PC-9 (cell line): ENCODE measurements at regions of chr7 and their contacts with region 1.

Region 1: DNA sequence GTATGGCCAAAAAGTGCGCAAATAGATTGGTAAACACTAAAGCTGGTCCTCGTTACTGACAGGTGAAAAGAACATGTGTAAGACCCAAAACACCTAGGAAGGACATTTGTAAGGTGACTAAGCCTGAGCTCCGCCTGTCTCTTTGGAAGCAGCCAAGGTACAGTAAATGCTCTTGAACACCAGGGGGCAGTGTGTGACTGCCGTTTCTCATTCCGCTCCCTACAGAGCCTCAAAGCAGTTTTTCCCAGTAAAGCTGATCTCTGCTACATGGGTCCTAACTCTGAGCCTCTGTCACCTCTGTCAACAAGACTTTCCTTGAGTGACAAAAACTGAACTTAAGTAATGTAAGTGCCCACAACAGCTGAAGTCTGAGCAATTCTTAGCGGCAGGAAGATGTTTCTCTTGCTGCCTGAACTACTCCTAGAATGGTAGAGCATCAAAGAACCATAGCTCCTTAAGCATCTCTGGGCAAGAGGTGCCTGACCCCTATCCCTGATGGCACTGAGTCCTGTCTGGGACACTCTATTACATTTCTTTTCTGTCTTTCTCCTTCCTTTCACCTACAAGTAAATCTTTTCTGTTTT is 238.0 kb upstream of the INHBA start:
- DNase-seq: peak; percentile 61 to 69
- H3K4me3 ChIP-seq: no peak overlapping the region
- H3K27ac ChIP-seq: no peak overlapping the region
- H3K4me1 ChIP-seq: no peaks in the 10 kb centered on the region
- H3K27me3 ChIP-seq: peaks cover 23% of the 10 kb centered on the region
- CTCF ChIP-seq: peak; percentile 96

Region 2: DNA sequence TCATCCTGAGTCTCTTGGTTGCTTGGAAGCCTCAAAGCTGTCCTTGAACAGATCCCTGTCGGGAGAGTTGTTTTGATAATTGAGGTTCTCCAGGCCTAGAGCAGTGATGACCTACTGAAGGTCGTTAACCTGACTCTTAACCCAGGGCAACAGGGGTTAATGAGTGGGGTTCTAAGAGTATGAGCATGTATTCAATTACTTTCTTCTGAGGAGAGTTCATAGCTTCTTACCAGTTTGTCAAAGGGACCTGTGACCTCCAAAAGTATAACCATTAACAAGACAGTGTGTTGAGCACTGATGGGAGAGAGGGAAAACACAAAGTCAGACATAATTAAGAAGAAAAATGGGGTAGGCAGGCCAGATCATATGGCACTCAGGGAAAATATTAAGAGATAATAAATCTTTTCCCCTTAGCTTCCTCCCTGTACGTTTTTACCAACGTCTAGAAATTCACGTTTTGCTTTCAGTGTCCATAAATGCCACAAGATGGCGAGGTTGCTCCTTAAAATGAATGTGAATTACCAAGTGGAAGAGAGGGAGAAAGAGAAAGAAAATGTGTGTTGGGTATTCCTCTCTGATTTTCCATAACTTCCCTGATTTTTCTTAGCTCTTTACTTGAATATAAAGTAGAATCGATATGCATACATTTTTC is 1708.5 kb before region 1 on chr7:
- CTCF ChIA-PET with region 1: no interaction called
- POLR2A ChIA-PET with region 1: no interaction called
- intact Hi-C with region 1: loop called (anchors 5 kb)
- DNase-seq: peak; percentile 28 to 48
- H3K4me3 ChIP-seq: no peak overlapping the region
- H3K27ac ChIP-seq: no peak overlapping the region
- H3K4me1 ChIP-seq: no peaks in the 10 kb centered on the region
- H3K27me3 ChIP-seq: no peaks in the 10 kb centered on the region
- CTCF ChIP-seq: peak; percentile 84

Region 3: GRCh38 chr7:41892356-41893100 is 48.3 kb before region 1 on chr7:
- CTCF ChIA-PET with region 1: no interaction called
- POLR2A ChIA-PET with region 1: no interaction called
- intact Hi-C with region 1: no loop called
- DNase-seq: peak in 1 of 2 experiments; percentile 26
- H3K4me3 ChIP-seq: no peak overlapping the region
- H3K27ac ChIP-seq: no peak overlapping the region
- H3K4me1 ChIP-seq: no peaks in the 10 kb centered on the region
- H3K27me3 ChIP-seq: no peaks in the 10 kb centered on the region
- CTCF ChIP-seq: no peak; the same call in 1 of the 2 replicates

Region 4: GRCh38 chr7:42006801-42007513 is 66.1 kb after region 1 on chr7:
- CTCF ChIA-PET with region 1: interaction called, 17 read pairs
- POLR2A ChIA-PET with region 1: no interaction called
- intact Hi-C with region 1: no loop called
- DNase-seq: no peak
- H3K4me3 ChIP-seq: no peak overlapping the region
- H3K27ac ChIP-seq: no peak overlapping the region
- H3K4me1 ChIP-seq: no peaks in the 10 kb centered on the region
- H3K27me3 ChIP-seq: peaks cover 85% of the 10 kb centered on the region
- CTCF ChIP-seq: no peak

Region 5: GRCh38 chr7:42690794-42691639 is 750.2 kb after region 1 on chr7:
- CTCF ChIA-PET with region 1: no interaction called
- POLR2A ChIA-PET with region 1: no interaction called
- intact Hi-C with region 1: loop called (anchors 1 kb)
- DNase-seq: peak in 1 of 2 experiments; percentile 7
- H3K4me3 ChIP-seq: no peak overlapping the region
- H3K27ac ChIP-seq: no peak overlapping the region
- H3K4me1 ChIP-seq: no peaks in the 10 kb centered on the region
- H3K27me3 ChIP-seq: peaks cover 59% of the 10 kb centered on the region
- CTCF ChIP-seq: peak; percentile 56

Region 6: DNA sequence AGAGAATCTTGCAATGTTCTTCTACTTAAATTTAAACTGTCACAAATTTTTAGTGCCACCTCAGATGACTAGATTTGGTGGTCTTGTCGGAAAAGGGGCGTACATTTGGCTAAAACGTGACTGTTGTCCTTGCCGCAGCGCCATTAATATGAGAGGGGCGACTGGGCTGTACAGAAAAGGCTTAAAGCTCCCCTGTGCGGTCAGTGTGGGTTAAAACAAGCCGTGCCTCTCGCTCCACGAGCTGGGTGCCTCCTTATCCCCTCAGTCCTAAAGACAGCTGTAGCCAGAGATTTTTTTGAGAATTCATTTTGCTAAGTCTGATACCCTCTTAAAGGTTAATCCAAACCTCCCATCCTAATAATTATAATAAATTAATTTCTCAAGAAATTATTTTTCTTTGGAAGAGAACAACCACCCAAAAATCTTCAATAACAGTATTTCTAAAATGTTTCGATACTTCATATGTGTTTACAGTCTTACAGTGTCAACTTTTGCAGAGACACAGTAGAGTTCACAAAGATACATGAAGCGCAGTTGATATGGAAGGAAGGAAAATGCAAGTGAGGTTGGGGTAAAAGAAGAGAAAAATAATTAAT is 902.5 kb after region 1 on chr7:
- CTCF ChIA-PET with region 1: interaction called, 4 read pairs
- POLR2A ChIA-PET with region 1: no interaction called
- intact Hi-C with region 1: loop called (anchors 5 kb)
- DNase-seq: peak in 1 of 2 experiments; percentile 22
- H3K4me3 ChIP-seq: no peak overlapping the region
- H3K27ac ChIP-seq: no peak overlapping the region
- H3K4me1 ChIP-seq: no peaks in the 10 kb centered on the region
- H3K27me3 ChIP-seq: peaks cover 42% of the 10 kb centered on the region
- CTCF ChIP-seq: peak; percentile 57; the same call in 1 of the 2 replicates

Region 7: DNA sequence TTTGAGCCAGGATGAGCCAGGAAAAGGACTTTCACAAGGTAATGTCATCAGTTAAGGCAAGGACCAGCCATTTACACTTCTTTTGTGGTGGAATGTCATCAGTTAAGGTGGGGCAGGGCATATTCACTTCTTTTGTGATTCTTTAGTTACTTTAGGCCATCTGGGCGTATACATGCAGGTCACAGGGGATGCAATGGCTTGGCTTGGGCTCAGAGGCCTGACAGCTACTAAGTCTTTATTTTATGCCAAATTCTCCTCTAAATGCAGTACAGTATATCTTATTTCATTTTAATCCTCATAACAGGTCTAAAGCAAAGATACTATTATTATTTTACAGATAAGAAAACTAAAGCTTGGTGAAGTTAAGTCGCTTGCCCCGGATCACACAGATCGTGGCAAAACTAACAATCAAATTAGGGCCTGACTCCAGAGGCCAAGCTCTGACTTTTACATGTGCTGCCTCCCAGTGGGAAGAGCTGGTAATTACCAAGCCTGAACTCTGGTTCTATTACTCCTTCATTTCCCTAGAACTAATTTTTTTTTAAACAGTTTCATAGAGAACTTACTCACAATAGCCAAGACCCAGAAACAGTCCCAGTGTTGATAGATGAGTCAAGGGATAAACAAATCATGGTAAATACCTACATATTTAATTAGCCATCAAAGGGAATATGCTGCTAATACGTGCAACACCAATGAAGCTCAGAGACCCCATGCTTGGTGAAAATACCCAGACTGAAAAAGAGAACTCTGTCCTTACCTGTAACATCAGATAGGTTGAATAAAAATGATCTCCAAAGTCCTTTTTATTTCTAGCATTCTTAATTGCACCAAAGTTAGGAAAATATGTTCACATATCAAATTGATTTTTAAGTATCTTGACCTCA is 935.6 kb after region 1 on chr7:
- CTCF ChIA-PET with region 1: interaction called, 3 read pairs
- POLR2A ChIA-PET with region 1: no interaction called
- intact Hi-C with region 1: loop called (anchors 1 kb)
- DNase-seq: peak; percentile 43 to 59
- H3K4me3 ChIP-seq: no peak overlapping the region
- H3K27ac ChIP-seq: no peak overlapping the region
- H3K4me1 ChIP-seq: no peaks in the 10 kb centered on the region
- H3K27me3 ChIP-seq: no peaks in the 10 kb centered on the region
- CTCF ChIP-seq: peak; percentile 95

Region 8: GRCh38 chr7:43439631-43440401 is 1499.0 kb after region 1 on chr7:
- CTCF ChIA-PET with region 1: no interaction called
- POLR2A ChIA-PET with region 1: no interaction called
- intact Hi-C with region 1: loop called (anchors 5 kb)
- DNase-seq: peak; percentile 28 to 49
- H3K4me3 ChIP-seq: no peak overlapping the region
- H3K27ac ChIP-seq: no peak overlapping the region
- H3K4me1 ChIP-seq: no peaks in the 10 kb centered on the region
- H3K27me3 ChIP-seq: peaks cover 32% of the 10 kb centered on the region
- CTCF ChIP-seq: peak; percentile 95